ENCODE measurements at regions of chr6 and their contacts with region 1.

Region 1: GRCh38 chr6:170295510-170296422 is 4.9 kb upstream of the DLL1 start:
- DNase-seq: peak in 4 of 5 donors; percentile 43 to 50 (median 45)
- H3K4me3 ChIP-seq: peak overlapping the region; percentile 17 to 49
- H3K4me3 Mint-ChIP-seq: peak overlapping the region; percentile 69 to 80 (median 76)
- H3K27ac ChIP-seq: no peak overlapping the region
- H3K27ac Mint-ChIP-seq: no peak overlapping the region
- H3K4me1 ChIP-seq: peaks cover 53% of the 10 kb centered on the region
- H3K4me1 Mint-ChIP-seq: peaks cover 24 to 43% (median 30%) of the 10 kb centered on the region in 4 donors
- H3K27me3 ChIP-seq: peaks cover 37% of the 10 kb centered on the region
- H3K27me3 Mint-ChIP-seq: peaks cover 38 to 51% of the 10 kb centered on the region in 2 donors

Region 2: GRCh38 chr6:169789982-169790927 is 505.5 kb before region 1 on chr6:
- CTCF ChIA-PET with region 1: interaction called, 3 read pairs
- POLR2A ChIA-PET with region 1: no interaction called
- intact Hi-C with region 1: loop called (anchors 1 kb)
- DNase-seq: peak; percentile 60 to 73 (median 69)
- H3K4me3 ChIP-seq: peak overlapping the region; percentile 71 to 82
- H3K4me3 Mint-ChIP-seq: peak overlapping the region; percentile 88 to 93 (median 90)
- H3K27ac ChIP-seq: peak overlapping the region; percentile 4
- H3K27ac Mint-ChIP-seq: peak overlapping the region in 5 of 7 donors; percentile 53 to 88 (median 81)
- H3K4me1 ChIP-seq: peaks cover 16% of the 10 kb centered on the region
- H3K4me1 Mint-ChIP-seq: peaks cover 6 to 24% (median 13%) of the 10 kb centered on the region in 4 donors
- H3K27me3 ChIP-seq: no peaks in the 10 kb centered on the region
- H3K27me3 Mint-ChIP-seq: peaks cover 0 to 3% of the 10 kb centered on the region in 2 donors

Region 3: DNA sequence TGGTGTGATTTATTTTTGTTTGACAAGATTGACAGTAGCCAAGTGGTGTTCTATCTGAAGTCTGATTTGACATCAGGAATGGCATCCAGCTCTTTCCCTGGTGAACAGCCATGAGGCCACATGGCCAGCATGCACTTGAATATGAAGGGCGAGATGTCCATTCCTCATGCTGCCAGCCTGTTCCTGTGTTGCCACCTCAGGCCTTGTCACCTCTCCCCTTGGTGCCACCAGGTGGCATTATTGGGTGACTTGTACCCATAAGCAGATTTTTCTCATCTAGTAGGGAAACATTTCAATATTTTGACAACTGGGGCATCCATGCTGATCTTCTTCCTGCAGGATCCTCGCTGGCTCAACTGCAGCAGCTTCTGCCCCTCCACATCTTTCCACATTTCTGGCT is 345.2 kb before region 1 on chr6:
- CTCF ChIA-PET with region 1: interaction called, 28 read pairs
- POLR2A ChIA-PET with region 1: interaction called, 4 read pairs
- intact Hi-C with region 1: loop called (anchors 1 kb)
- DNase-seq: peak in 2 of 5 donors; percentile 15 to 22
- H3K4me3 ChIP-seq: no peak overlapping the region
- H3K4me3 Mint-ChIP-seq: no peak overlapping the region
- H3K27ac ChIP-seq: no peak overlapping the region
- H3K27ac Mint-ChIP-seq: no peak overlapping the region
- H3K4me1 ChIP-seq: no peaks in the 10 kb centered on the region
- H3K4me1 Mint-ChIP-seq: no peaks in the 10 kb centered on the region
- H3K27me3 ChIP-seq: no peaks in the 10 kb centered on the region
- H3K27me3 Mint-ChIP-seq: peaks cover 0 to under 1% of the 10 kb centered on the region in 2 donors

Region 4: GRCh38 chr6:170087941-170088581 is 207.7 kb before region 1 on chr6:
- CTCF ChIA-PET with region 1: interaction called, 7 read pairs
- POLR2A ChIA-PET with region 1: interaction called, 10 read pairs
- intact Hi-C with region 1: loop called (anchors 5 kb)
- DNase-seq: peak; percentile 46 to 71 (median 48)
- H3K4me3 ChIP-seq: peak overlapping the region; percentile 57 to 61
- H3K4me3 Mint-ChIP-seq: peak overlapping the region; percentile 83 to 96 (median 91)
- H3K27ac ChIP-seq: peak overlapping the region; percentile 40
- H3K27ac Mint-ChIP-seq: peak overlapping the region; percentile 78 to 98 (median 92)
- H3K4me1 ChIP-seq: peaks cover 25% of the 10 kb centered on the region
- H3K4me1 Mint-ChIP-seq: peaks cover 21 to 47% (median 32%) of the 10 kb centered on the region in 4 donors
- H3K27me3 ChIP-seq: no peaks in the 10 kb centered on the region
- H3K27me3 Mint-ChIP-seq: no peaks in the 10 kb centered on the region

Region 5: GRCh38 chr6:170271771-170272314 is 23.9 kb before region 1 on chr6:
- CTCF ChIA-PET with region 1: interaction called, 5 read pairs
- POLR2A ChIA-PET with region 1: interaction called, 47 read pairs
- intact Hi-C with region 1: loop called (anchors 1 kb)
- DNase-seq: peak; percentile 77 to 87 (median 80)
- H3K4me3 ChIP-seq: peak overlapping the region; percentile 51 to 61
- H3K4me3 Mint-ChIP-seq: peak overlapping the region; percentile 82 to 96 (median 90)
- H3K27ac ChIP-seq: no peak overlapping the region
- H3K27ac Mint-ChIP-seq: peak overlapping the region; percentile 64 to 93 (median 82)
- H3K4me1 ChIP-seq: peaks cover 22% of the 10 kb centered on the region
- H3K4me1 Mint-ChIP-seq: peaks cover 11 to 29% (median 18%) of the 10 kb centered on the region in 4 donors
- H3K27me3 ChIP-seq: no peaks in the 10 kb centered on the region
- H3K27me3 Mint-ChIP-seq: peaks cover 2 to 5% of the 10 kb centered on the region in 2 donors

Region 6: DNA sequence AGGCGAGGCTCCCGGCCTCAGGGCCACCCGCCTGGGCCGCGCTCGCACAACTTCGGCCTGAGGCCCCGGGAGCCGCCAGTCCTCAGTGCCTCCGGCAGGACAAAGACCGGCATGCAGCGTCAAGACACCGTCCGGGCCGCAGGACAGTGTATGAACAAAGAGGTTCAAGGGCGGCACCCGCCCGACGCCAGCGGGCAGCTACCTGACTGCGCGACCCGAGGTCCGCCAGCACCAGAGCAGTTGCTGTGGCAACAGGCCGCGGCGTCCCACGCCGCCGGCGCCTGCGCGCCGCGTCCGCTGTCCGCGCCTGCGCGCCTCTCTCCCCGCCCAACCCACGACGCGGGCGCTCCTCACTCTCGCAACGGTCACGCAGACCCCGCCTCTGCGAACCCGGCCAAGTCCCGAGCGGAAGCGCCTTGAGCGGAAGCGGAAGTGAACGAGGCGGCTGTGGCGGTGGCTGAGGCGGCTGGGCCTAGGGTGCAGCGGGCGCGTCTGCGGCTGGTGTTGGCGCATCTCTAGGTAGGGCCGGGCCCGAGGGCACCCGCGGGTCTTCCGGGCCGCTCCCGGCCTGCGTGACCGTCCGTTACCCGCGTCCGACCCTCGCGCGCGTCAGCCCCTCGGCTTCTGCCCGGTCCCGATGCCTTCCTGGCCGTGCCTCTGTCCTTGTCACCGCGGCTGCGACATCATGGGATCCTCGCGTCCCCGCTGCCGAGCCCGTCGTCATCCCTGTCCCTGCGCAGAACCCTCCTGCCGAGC is 10.7 kb after region 1 on chr6 and contains the start of gene FAM120B:
- CTCF ChIA-PET with region 1: interaction called, 31 read pairs
- POLR2A ChIA-PET with region 1: interaction called, 22 read pairs
- intact Hi-C with region 1: loop called (anchors 1 kb)
- DNase-seq: peak; percentile 95 to 96 (median 95)
- H3K4me3 ChIP-seq: peak within 1 kb of the TSS; percentile 85 to 99
- H3K4me3 Mint-ChIP-seq: peak within 1 kb of the TSS; percentile 91 to 99 (median 94)
- H3K27ac ChIP-seq: peak within 1 kb of the TSS; percentile 84
- H3K27ac Mint-ChIP-seq: peak within 1 kb of the TSS; percentile 93 to 98 (median 97)
- H3K4me1 ChIP-seq: peaks cover 53% of the 10 kb centered on the region
- H3K4me1 Mint-ChIP-seq: peaks cover 34 to 43% (median 41%) of the 10 kb centered on the region in 4 donors
- H3K27me3 ChIP-seq: no peaks in the 10 kb centered on the region
- H3K27me3 Mint-ChIP-seq: peaks cover 8 to 14% of the 10 kb centered on the region in 2 donors
- total RNA-seq, gene FAM120B: 46.8 to 48.6 TPM

Measured in CD4-positive, alpha-beta memory T cell (primary cell).